Sciatic nerve (tissue), 2 donors: ENCODE measurements at regions of chr2 and their contacts with region 1.

Region 1: DNA sequence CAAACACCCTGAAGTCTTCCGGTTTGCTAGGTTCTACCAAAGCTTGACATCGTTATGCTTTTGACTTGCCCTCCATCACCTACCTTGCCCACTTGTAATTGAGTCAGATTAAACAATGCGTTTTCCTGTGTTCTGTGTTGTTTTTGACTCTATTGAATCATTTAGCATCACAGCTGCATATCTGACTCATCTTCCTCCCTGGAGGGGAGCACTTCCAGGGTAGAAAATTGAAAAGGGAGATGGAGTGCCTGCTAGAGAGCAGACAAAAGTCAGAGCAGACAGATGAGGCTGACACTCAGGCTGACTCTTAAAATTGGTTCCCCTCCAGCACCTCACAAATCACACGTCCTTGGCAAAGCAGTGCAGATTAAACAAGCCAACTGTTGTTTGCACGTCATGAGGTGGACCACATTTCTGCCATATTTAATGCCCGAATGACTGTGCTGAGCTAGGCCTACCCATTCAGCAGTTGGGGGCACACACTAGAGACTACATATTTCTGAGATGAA is 2.2 kb downstream of the MPP4 start:
- DNase-seq: no peak
- ATAC-seq: peak; percentile 50

Region 2: DNA sequence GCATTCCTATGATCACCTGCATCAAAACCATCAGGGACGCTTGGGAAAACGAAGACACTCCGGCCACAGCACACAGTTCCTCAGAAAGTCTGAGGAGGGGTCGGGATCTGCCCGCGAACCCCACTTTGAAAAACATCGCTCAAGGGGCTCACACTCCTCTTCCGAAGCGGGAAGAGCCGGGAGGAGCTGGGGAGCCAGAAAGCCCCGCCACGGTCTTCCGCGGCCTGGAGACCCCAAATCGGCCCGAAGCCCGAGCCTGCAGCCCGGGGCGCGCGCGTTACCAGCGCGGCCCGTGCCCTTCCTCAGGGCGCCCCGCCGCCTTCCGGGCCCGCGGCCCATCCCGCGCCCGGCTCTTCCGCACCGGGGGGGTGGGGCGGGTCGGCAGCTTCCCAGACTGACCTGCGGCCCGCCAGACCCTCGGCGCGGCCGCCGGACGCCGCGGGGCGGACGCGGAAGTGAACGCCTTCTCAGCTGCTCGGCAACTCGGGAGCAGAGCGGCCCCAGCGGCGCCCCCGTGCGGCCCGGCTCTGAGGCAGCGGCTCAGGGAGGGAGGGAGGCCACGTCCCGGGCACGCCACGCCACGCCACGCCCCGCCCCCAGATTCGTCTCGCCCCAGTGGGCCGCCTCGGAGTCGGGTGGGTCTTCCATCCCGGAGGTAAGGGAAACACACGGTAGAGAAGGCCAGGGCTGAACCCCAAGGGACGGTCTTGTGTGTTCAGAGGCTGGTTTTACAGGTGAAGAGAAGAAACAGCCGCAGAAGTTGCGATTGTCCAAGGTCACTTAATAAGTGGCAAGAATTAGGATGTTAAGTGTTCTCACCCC is 1186.4 kb before region 1 on chr2 and contains the start of gene KCTD18:
- intact Hi-C with region 1: no loop called
- DNase-seq: peak; percentile 96
- ATAC-seq: peak; percentile 98
- total RNA-seq, gene KCTD18: 13.0 TPM

Region 3: DNA sequence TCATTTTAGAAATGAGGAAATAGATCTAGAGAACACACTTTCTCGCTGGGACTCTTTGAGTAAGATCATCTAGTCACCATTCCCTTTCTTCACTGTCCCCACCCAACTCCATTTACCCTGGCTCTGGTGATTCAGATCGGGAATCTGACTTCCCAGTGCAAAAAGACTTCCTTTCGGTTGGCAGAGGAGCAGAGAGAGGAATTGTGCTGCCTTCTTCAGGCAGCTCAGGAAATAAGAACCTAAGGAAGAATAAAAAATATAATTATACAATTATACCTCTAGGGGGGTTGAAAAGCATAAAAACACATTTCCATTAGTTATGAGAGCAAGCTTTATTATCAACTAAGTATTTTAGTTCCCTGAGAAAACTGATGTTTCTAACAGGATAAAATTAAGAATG is 11.5 kb after region 1 on chr2:
- intact Hi-C with region 1: loop called (anchors 2 kb)
- DNase-seq: no peak
- ATAC-seq: peak; percentile 36